ENCODE measurements at regions of chr3 and their contacts with region 1.

Region 1: DNA sequence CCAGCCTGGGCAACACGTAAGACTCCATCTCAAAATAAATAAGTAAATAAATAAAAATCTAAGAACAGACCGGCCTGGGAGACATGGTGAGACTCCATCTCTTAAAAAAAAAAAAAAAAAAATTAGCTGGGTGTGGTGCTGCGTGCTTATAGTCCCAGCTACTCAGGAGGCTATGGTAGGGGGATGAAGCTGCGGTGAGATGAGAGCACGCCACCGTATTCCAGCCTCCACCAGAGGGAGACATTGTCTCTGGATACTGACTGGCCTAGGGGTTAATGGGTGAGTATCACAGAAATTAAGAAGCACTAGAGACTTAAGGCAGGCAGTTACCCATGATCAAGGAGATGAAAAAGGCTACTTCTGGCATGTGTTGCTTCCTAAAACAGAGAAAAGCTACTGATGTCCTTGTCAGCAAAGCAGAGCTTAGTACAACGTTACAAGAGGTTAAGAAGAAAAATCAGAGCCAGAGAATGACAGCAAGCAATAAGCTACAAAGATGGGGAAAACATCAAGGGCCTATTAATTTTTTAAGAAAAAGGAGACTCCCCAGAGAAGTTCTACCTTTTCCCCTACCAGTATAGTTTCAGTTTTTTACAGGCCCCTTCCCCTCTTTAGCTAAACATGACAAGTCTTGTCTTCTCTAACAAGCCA is 8.6 kb downstream of the TFRC start:
- DNase-seq: peak; percentile 65
- CTCF ChIP-seq: peak; percentile 66

Region 2: DNA sequence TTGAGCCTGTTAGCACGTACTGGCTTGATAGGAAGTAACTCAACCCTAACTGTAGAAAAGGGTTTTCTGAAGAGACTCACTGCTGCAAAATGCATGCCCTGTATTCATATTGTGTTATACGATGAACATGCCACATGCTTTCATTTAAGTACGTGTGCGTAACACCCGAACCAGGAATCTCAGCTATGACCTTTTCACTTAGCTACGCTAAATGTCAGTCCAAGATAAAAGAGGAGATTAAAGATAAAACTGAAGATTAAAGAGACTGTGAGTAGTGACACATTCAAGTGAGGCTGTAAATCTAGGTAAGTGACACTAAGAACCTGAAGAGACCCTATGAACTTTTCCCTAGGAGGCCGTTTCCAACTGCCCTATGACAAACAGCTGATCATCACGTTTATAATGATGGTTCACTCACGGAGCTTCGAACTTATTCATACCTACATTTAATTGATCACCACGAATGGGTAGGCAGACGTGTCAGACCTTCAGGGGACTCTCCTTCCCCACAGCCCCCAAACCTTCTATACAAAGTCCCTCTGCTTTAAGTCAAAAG is 23.7 kb before region 1 on chr3:
- CTCF ChIA-PET with region 1: interaction called, 10 read pairs
- POLR2A ChIA-PET with region 1: no interaction called
- DNase-seq: no peak
- CTCF ChIP-seq: no peak

Region 3: DNA sequence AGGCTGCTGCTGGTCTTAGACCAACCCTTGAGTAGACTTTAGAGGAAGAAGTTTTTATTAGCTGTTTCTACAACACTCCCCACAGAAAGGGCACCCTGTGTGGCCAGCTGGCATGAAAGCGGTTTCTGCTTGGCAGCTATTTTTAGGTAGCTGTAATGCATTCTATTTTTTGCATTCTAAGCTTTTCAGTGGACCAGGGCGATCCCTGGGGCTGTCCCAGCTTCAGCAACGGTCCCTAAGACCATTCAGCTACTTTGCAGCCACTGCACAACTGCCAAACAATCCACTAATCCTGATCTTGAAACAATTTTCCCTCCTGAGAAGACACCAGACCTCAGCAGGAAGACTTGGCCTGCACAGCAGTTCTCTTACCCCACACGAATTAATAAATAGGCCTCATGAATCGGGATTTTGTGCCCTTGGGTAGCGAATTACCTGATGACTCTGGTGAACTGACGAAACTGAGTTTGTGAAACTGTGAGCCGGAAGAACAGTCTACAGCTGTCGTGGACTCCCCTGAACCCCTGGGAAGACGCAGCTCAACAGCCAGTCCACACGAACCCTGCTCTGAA is 23.2 kb after region 1 on chr3:
- CTCF ChIA-PET with region 1: interaction called, 23 read pairs
- POLR2A ChIA-PET with region 1: no interaction called
- DNase-seq: peak; percentile 65
- CTCF ChIP-seq: no peak

Region 4: GRCh38 chr3:196179380-196180308 is 106.3 kb after region 1 on chr3:
- CTCF ChIA-PET with region 1: interaction called, 34 read pairs
- POLR2A ChIA-PET with region 1: interaction called, 7 read pairs
- DNase-seq: peak; percentile 84
- CTCF ChIP-seq: peak; percentile 34

Region 5: DNA sequence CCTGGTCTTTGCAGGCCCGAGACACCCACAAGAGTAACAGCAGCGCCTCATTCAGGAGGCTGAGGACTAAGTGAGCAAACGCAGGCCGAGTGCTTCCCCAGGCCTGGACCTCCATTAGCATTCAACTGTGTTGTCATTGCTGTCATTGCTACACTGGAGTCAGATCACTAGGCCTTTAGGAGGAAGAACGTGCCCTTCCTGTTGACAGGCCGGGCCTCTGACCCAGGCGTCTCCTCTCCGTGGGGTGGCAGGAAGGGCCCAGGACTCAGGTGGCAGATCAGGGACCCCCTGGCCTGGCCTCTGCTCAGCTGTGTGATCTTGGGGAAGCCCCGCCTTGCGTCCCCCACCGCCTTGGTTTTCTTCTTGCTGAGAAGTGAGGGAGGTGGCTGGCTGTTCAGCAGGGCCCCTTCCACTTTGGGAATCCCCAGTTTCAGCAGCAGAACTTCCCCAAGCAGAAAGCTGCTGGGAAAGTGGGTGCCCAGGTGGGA is 118.8 kb after region 1 on chr3:
- CTCF ChIA-PET with region 1: interaction called, 195 read pairs
- POLR2A ChIA-PET with region 1: no interaction called
- DNase-seq: peak; percentile 60
- CTCF ChIP-seq: no peak

Region 6: GRCh38 chr3:196399485-196399945 is 326.2 kb after region 1 on chr3:
- CTCF ChIA-PET with region 1: no interaction called
- POLR2A ChIA-PET with region 1: no interaction called
- DNase-seq: no peak
- CTCF ChIP-seq: no peak

Measured in GM10248 (cell line).